Calu3 (cell line): ENCODE measurements at regions of chr2 and their contacts with region 1.

Region 1: DNA sequence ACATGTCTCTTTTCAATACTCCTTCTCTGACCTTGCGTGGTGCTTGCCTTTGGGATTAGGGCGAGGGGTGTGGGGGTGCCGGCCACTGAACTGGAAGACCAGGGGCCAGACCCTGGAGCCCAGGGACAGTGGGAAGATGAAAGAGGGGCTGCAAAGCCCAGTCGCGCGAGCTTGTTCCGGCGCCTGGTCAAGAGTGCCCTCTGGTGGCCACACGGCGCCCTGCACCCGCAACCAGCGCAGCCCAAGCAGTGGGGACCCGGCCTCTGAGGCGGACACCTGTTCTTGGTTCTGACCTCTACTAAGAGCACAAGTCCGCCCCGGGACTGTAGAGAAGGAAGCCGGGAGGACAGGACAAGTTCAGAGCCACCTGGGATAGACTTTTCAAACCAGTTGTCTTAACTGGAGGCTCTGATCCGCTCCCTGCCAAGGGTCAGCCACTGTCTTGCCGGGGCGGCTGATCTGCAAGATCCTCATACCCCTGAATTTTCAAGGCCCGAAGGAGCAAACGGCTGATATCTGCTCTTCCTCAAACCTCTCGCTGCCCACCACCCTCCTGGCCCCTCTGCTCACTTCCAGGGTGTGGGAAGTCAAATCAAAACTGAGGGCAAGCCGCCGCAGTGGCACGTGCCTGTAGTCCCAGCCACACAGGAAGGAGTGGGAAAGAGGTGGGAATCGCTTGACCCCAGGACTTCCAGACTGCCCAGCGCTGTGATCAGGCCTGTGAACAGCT is 14.9 kb upstream of the MSH6 start:
- DNase-seq: peak; percentile 83
- H3K4me3 Mint-ChIP-seq: no peak overlapping the region
- H3K27ac Mint-ChIP-seq: no peak overlapping the region
- H3K4me1 Mint-ChIP-seq: peaks cover 8% of the 10 kb centered on the region
- H3K27me3 Mint-ChIP-seq: peaks cover 22% of the 10 kb centered on the region
- CTCF ChIP-seq: peak; percentile 98

Region 2: DNA sequence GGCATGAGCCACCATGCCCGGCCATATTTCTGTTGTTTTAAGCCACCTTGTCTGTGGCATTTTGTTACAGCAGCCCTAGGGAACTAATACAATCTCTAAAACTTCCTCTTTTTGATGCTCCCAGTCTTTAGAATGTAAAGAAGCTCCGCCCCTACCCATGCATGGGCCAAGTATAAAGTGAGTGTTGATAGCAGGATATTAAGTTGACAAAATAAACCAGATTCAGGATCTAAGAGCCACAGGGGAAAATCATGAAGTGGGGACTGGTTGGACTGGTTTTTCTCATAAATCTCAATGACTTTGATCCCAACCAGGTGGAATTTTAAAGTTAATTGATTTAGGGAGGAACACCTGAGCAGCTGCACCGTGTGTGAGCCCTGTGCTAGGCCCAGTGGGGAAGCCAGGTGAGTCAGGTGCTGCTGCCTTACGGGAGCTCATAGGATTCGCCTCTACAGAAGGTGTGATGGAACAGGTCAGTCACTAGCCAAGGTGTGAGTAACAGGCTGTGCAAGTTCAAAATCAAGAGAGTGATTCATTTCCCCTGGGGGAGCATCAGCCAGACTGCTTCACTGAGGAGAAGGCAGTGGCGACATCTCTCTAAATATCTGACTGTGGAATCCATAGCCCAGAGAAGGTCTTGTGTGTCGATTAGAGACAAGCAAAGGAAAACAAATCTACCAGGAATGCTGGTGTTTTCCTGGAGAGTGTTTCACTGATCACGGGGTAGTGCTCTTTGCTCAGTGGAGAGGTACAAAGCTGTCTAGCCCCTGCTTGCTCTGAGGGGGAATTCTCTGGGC is 428.1 kb before region 1 on chr2:
- CTCF ChIA-PET with region 1: interaction called, 5 read pairs
- intact Hi-C with region 1: loop called (anchors 5 kb)
- DNase-seq: peak; percentile 84
- H3K4me3 Mint-ChIP-seq: peak overlapping the region; percentile 55
- H3K27ac Mint-ChIP-seq: peak overlapping the region; percentile 94
- H3K4me1 Mint-ChIP-seq: peaks cover 49% of the 10 kb centered on the region
- H3K27me3 Mint-ChIP-seq: no peaks in the 10 kb centered on the region
- CTCF ChIP-seq: no peak

Region 3: DNA sequence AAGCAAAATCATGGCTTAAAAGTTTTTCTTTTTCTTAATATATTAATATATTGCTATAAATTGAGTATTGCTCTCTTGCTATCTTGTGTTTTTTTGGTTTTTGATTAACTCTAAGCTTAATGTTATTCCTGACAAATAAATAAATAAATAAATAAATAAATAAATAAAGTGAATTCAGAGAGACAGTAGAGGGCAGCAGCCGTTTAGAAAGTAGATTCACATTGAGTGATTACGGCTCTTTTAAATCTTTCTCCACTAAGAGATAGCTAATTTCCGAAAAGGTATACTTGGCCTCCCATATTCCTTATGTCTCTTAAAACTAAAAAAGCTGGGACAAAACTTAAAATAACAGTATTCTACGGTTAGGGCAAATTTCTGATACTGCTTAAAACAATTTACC is 330.8 kb before region 1 on chr2:
- CTCF ChIA-PET with region 1: interaction called, 12 read pairs
- intact Hi-C with region 1: loop called (anchors 5 kb)
- DNase-seq: no peak
- H3K4me3 Mint-ChIP-seq: no peak overlapping the region
- H3K27ac Mint-ChIP-seq: no peak overlapping the region
- H3K4me1 Mint-ChIP-seq: no peaks in the 10 kb centered on the region
- H3K27me3 Mint-ChIP-seq: no peaks in the 10 kb centered on the region
- CTCF ChIP-seq: peak; percentile 28

Region 4: DNA sequence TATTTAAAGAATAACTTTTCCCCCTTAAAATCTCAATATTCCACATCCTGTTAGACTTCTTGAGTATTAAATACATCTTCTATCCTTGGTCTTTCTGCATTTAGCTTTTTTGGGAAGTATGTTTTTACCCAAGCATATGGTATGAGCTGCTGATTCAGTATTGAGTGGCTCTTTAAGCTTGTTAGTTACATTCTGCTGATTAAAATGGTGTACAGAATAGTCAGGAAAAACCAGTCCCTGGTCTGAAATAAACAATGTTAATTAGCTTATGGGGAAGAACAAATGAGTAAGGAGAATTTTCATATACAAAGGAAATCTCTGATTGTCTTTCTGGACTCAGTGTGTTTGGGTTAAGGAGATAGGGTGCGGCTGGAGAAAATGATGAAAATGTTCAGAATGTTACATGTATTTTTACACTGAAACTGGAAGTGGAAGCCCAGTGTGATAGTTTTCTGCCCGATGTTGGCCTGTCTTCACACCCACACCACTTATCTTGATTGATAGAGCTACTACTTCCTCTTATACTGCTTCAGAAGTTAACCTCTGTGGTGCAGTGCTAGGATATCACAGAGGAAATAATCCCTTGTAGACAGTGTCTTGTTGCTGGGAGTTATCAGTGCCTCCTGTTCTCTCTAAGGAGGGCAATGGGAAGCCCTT is 281.1 kb before region 1 on chr2:
- CTCF ChIA-PET with region 1: no interaction called
- intact Hi-C with region 1: loop called (anchors 10 kb)
- DNase-seq: no peak
- H3K4me3 Mint-ChIP-seq: no peak overlapping the region
- H3K27ac Mint-ChIP-seq: no peak overlapping the region
- H3K4me1 Mint-ChIP-seq: peaks cover 15% of the 10 kb centered on the region
- H3K27me3 Mint-ChIP-seq: no peaks in the 10 kb centered on the region
- CTCF ChIP-seq: no peak

Region 5: GRCh38 chr2:47631792-47632398 is 136.2 kb before region 1 on chr2:
- CTCF ChIA-PET with region 1: no interaction called
- intact Hi-C with region 1: loop called (anchors 5 kb)
- DNase-seq: peak; percentile 85
- H3K4me3 Mint-ChIP-seq: no peak overlapping the region
- H3K27ac Mint-ChIP-seq: peak overlapping the region; percentile 38
- H3K4me1 Mint-ChIP-seq: peaks cover 23% of the 10 kb centered on the region
- H3K27me3 Mint-ChIP-seq: peaks cover 1% of the 10 kb centered on the region
- CTCF ChIP-seq: no peak

Region 6: DNA sequence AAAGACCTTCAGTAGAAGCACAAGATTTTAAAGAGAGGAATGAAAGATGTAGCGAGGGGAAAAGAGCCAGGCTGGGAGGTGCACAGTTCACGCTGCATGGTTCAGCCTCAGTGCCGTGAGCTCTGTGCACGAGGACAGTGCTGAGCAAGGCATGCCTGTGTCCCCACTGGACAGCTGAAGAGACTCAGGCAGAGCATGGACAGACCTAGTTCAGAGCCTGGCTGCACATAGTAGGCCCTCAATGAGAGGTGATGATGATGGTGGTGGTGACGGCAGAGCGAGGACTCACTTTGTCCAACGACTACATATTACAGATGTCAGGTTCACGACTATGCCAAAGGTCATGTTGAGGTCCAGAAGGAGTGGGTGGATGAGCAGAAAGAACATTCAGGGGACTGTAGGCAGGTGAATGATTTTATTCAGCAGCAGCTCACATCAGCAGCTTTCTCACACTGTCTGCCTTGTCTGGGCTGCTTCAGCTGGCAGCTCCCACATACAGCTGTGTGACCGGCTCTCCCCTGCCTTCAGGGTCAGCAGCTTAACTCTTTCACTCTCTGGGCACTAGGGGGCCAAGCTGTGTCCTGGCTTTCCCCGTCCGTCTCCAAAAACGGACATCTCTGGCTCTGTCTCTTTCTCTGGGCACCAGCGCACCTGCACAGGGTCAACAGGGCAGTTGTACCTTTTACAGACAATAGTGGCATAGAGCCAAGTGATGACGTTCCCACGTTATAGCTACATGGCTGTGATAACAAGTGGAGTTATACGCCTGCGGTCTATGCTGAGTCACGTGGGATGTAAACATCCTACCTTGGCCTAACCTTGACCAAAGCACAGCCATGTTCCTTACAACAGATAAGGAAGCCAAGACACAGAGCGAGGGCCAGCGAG is 113.9 kb before region 1 on chr2:
- CTCF ChIA-PET with region 1: interaction called, 6 read pairs
- intact Hi-C with region 1: loop called (anchors 10 kb)
- DNase-seq: peak; percentile 40
- H3K4me3 Mint-ChIP-seq: no peak overlapping the region
- H3K27ac Mint-ChIP-seq: no peak overlapping the region
- H3K4me1 Mint-ChIP-seq: peaks cover 13% of the 10 kb centered on the region
- H3K27me3 Mint-ChIP-seq: peaks cover 17% of the 10 kb centered on the region
- CTCF ChIP-seq: peak; percentile 30

Region 7: GRCh38 chr2:47782671-47783485 is 14.8 kb after region 1 on chr2 and contains the start of gene MSH6:
- CTCF ChIA-PET with region 1: no interaction called
- intact Hi-C with region 1: loop called (anchors 1 kb)
- DNase-seq: peak; percentile 91
- H3K4me3 Mint-ChIP-seq: peak within 1 kb of the TSS; percentile 96
- H3K27ac Mint-ChIP-seq: peak within 1 kb of the TSS; percentile 87
- H3K4me1 Mint-ChIP-seq: peaks cover 16% of the 10 kb centered on the region
- H3K27me3 Mint-ChIP-seq: no peaks in the 10 kb centered on the region
- CTCF ChIP-seq: no peak
- total RNA-seq, gene MSH6: 67.9 and 88.1 TPM in 2 replicates

Region 8: DNA sequence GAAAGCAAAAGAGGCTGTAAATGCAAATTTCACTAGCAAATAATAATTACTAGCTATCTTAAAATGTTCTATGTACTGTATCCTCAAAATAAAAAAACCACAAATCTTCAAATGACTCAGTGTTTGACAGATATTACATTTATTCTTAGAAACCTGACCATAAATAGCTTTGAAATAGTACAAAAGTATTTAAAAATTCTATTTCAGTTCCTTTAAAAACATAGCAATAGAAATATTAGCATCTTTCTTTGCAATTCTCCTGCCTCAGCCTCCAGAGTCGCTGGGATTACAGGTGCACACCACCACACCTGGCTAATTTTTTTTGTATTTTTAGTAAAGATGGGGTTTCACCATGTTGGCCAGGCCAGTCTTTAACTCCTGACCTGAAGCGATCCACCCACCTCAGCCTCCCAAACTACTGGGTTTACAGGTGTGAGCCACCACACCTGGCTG is 65.5 kb after region 1 on chr2:
- CTCF ChIA-PET with region 1: no interaction called
- intact Hi-C with region 1: no loop called
- DNase-seq: no peak
- H3K4me3 Mint-ChIP-seq: no peak overlapping the region
- H3K27ac Mint-ChIP-seq: no peak overlapping the region
- H3K4me1 Mint-ChIP-seq: no peaks in the 10 kb centered on the region
- H3K27me3 Mint-ChIP-seq: no peaks in the 10 kb centered on the region
- CTCF ChIP-seq: no peak